HepG2 (cell line): ENCODE measurements at regions of chr9 and their contacts with region 1.

Region 1: DNA sequence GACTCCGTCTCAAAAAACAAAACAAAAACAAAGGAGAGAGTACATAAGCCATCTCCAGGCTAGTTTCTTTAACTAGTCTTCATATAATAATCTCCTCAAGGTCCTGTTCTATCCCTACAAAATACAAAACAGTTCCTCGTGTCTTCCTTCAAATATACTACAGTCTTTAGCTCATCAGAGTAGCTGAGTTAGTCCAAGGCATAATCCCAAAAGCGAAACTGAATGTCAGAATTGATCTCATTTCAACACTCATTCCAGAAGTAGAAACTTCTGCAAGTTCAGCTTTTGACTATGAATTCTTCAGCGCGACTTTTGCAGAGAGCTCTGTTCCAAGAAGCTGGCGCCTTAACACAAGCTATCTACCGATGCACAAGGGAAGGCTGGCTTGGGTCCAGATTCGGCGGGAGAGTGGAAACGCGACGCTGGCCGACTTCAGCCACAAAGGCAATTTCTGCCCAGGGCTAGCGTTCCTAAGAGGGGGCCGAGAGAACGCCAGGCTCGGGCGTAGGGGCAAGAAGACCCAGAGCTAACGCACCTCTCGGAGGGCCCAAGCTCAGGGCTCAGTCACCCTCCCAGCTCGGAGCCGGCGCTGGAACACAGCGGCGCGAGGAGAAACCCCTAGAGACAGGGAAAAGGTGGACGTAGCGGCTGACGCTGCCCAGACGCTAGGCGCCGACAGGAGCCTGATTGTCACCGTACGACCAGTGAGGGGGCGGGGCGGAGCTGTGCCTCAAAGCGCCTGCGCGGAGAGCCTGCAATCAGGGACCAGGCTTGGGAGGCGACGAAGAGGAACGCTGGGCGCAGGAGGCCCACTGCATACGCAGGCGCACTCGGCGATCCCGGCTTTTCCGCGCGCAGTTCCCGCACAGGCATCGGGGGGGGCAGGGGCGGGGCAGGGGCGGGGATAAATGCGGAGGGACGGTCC is 469 bp upstream of the HSDL2 start:
- DNase-seq: peak; percentile 96
- ATAC-seq: peak; percentile 91
- H3K4me3 ChIP-seq: peak overlapping the region; percentile 84 to 94 (median 89)
- H3K27ac ChIP-seq: peak overlapping the region; percentile 98
- H3K4me1 ChIP-seq: peaks cover 68% of the 10 kb centered on the region
- H3K27me3 ChIP-seq: no peaks in the 10 kb centered on the region; a peak in 1 of 5 replicates
- CTCF ChIP-seq: peak; percentile 47
- EP300 ChIP-seq: no peak; a peak in 1 of 4 replicates
- POLR2A ChIP-seq: peak; percentile 91 to 96
- RAD21 ChIP-seq: peak; percentile 62

Region 2: DNA sequence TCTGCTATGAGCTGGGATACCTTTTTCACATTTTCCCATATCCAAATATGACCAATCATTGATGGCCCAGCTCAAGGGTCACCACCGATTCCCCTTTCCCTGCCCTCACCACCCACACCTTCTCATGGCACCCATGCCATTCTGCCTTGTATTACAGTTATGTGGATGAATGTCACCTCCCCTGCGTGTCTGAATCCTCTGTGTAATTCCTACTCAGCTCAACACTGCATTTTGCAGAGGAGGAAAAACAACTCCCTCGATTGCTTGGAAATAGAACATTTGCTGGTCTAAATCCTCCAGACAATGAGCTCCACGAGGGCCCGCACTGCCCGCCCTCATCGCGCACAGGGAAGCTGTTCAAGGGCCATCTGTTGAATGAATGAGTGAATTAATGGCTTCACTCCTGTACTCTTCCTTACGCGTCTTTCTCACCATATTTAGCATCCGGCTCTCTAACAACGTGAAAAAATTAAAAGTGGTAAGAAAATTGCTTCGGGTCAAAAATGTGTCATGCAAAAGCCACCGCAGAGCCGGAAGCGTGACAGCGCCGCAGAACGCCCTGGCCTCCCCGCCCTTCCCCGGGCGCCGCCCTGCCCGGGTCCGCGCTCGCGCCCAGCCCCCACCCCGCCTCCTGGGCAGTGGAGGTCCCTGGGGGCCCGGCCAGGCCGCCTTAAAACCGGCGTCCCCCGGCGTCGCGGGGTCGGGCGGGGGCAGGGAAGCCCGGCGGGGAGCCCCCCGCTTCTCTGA is 205.0 kb before region 1 on chr9:
- CTCF ChIA-PET with region 1: no interaction called
- POLR2A ChIA-PET with region 1: interaction called, 13 read pairs
- in situ Hi-C with region 1: no loop called
- intact Hi-C with region 1: no loop called
- DNase-seq: peak; percentile 44
- ATAC-seq: peak; percentile 79
- H3K4me3 ChIP-seq: peak overlapping the region; percentile 62 to 91 (median 89)
- H3K27ac ChIP-seq: peak overlapping the region; percentile 72
- H3K4me1 ChIP-seq: peaks cover 88% of the 10 kb centered on the region
- H3K27me3 ChIP-seq: no peaks in the 10 kb centered on the region; a peak in 1 of 5 replicates
- CTCF ChIP-seq: no peak
- EP300 ChIP-seq: no peak
- POLR2A ChIP-seq: no peak; a peak in 2 of 4 replicates
- RAD21 ChIP-seq: no peak; the same call in 1 of the 2 replicates

Region 3: DNA sequence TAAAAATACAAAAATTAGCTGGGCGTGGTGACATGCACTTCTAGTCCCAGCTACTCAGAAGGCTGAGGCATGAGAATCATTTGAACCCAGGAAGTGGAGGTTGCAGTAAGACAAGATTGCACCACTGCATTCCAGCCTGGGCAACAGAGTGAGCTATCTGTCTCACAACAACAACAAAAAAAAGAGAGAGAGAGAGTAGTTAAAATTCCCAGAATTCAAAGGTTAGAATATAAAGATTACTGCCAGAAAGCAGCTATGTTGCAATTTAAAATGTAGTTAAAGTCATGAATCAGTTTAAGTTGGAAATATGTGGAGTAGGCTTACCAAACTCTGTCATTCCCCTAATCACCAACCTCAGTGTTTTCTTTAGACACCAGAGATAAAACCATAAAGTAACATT is 145.7 kb before region 1 on chr9:
- CTCF ChIA-PET with region 1: no interaction called
- POLR2A ChIA-PET with region 1: no interaction called
- in situ Hi-C with region 1: no loop called
- intact Hi-C with region 1: no loop called
- DNase-seq: peak; percentile 18
- ATAC-seq: no peak
- H3K4me3 ChIP-seq: no peak overlapping the region
- H3K27ac ChIP-seq: no peak overlapping the region
- H3K4me1 ChIP-seq: peaks cover 14% of the 10 kb centered on the region
- H3K27me3 ChIP-seq: no peaks in the 10 kb centered on the region
- CTCF ChIP-seq: no peak
- EP300 ChIP-seq: no peak
- POLR2A ChIP-seq: no peak
- RAD21 ChIP-seq: no peak

Region 4: GRCh38 chr9:112361601-112362000 is 17.8 kb before region 1 on chr9:
- CTCF ChIA-PET with region 1: no interaction called
- POLR2A ChIA-PET with region 1: interaction called, 15 read pairs
- in situ Hi-C with region 1: no loop called
- intact Hi-C with region 1: no loop called
- DNase-seq: peak; percentile 37
- ATAC-seq: peak; percentile 57
- H3K4me3 ChIP-seq: no peak overlapping the region
- H3K27ac ChIP-seq: no peak overlapping the region
- H3K4me1 ChIP-seq: peaks cover 6% of the 10 kb centered on the region
- H3K27me3 ChIP-seq: no peaks in the 10 kb centered on the region
- CTCF ChIP-seq: peak; percentile 56
- EP300 ChIP-seq: no peak
- POLR2A ChIP-seq: no peak
- RAD21 ChIP-seq: 0 out of 2 replicates have a peak, but pooled peaks have one; percentile 36

Region 5: DNA sequence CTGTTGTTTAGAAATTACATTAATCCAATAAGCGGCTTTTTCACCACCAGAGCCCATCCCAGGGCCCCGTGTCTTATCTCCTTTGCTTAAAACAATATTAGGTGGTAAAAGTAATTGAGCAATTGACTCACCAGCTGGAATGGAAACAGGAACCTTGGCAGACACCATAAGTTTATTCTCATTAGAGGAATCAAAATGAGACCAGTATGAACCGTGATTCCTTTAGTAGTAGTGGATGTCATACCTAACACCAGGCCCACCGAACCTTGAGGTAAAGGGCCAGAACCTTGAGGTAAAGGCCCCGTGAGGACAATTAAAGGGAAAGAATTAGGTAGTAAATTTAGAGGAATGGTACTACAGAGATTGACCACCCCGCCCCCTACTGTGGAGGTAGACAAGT is 17.0 kb after region 1 on chr9:
- CTCF ChIA-PET with region 1: no interaction called
- POLR2A ChIA-PET with region 1: interaction called, 14 read pairs
- in situ Hi-C with region 1: no loop called
- intact Hi-C with region 1: loop called (anchors 1 kb)
- DNase-seq: no peak
- ATAC-seq: no peak
- H3K4me3 ChIP-seq: no peak overlapping the region
- H3K27ac ChIP-seq: peak overlapping the region; percentile 47
- H3K4me1 ChIP-seq: peaks cover 78% of the 10 kb centered on the region
- H3K27me3 ChIP-seq: no peaks in the 10 kb centered on the region
- CTCF ChIP-seq: no peak
- EP300 ChIP-seq: no peak
- POLR2A ChIP-seq: no peak
- RAD21 ChIP-seq: no peak

Region 6: DNA sequence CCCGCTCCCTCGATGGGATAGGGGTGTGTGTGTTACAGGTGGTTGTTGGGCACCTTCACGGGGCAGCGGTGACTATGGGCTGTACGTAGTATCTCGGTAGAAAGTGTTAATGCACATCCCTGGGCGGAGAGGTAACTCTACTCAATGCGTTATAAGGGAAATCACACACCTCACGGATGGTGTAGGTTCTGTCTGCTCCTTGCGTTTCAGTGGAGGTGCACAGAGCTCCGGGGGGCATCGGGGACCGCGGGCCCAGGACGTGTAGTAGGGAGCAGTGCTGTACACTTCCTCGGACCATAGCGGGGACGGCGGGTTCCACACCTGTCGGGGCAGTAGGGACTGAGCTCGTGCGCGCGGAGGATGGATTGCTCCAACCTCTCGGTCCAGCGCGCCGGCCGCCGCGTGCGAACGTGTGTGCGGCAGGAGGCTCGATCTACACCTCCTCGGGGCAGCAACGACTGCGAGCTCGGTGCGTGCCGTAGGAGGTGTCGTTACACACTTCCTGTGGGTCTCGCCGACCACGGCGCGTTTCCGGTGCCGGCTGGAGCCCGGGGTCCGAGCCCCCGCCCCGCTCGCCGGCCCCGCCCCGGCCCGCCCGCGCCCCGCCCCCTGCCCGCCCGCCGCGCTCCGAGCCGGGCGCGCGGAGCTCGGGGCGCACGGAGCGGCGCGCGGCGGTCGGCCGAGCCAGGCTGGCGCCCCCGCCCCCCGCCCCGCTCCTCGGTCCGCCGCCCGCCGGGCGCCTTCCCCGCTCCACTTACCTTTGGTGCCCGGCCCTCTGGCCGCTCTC is 107.0 kb after region 1 on chr9 and contains the start of gene KIAA1958:
- CTCF ChIA-PET with region 1: no interaction called
- POLR2A ChIA-PET with region 1: interaction called, 16 read pairs
- in situ Hi-C with region 1: no loop called
- intact Hi-C with region 1: no loop called
- DNase-seq: peak; percentile 81
- ATAC-seq: peak; percentile 90
- H3K4me3 ChIP-seq: peak within 1 kb of the TSS; percentile 88 to 95 (median 93)
- H3K27ac ChIP-seq: peak within 1 kb of the TSS; percentile 86
- H3K4me1 ChIP-seq: peaks cover 45% of the 10 kb centered on the region
- H3K27me3 ChIP-seq: no peaks in the 10 kb centered on the region; a peak in 1 of 5 replicates
- CTCF ChIP-seq: peak; percentile 36
- EP300 ChIP-seq: no peak
- POLR2A ChIP-seq: peak; percentile 92 to 99
- RAD21 ChIP-seq: peak; percentile 42
- total RNA-seq, gene KIAA1958: 8.5 and 11.4 TPM in 2 replicates

Region 7: DNA sequence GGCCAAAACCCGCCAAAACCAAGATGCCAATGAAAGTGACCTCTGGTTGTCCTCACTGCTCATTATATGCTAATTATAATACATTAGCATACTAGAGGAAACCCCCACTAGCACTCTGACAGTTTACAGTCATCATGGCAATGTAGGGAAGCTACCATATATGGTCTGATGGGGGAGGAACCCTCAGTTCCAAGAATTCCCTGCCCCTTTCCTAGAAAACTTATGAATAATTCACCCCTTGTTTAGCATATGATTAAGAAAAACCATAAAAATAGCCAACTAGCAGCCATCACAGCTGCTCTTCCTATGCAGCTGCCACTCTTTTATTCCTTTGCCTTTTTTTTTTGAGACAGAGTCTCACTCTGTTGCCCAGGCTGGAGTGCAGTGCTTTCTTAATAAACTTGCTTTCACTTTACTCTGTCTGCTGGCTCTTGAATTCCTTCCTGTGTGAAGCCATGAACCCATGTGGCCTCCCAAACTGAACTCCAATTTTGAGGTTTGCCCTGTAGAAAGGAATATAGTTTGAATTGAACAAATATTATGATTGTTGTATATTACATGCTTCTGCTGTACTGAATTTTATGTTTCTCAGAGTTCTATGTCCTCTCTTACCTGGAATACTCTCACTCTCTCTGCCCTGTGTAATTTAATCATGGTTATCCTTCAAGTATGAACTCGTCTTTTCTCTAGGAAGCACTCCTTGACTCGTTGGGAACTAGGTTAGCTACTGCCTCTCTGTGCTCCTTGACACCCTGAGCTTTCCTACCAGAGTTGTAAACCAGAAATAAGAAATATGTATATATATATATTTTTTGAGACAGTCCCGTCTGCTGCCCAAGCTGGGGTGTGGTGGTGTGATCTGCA is 166.9 kb after region 1 on chr9:
- CTCF ChIA-PET with region 1: no interaction called
- POLR2A ChIA-PET with region 1: no interaction called
- in situ Hi-C with region 1: no loop called
- intact Hi-C with region 1: no loop called
- DNase-seq: no peak
- ATAC-seq: no peak
- H3K4me3 ChIP-seq: no peak overlapping the region
- H3K27ac ChIP-seq: no peak overlapping the region
- H3K4me1 ChIP-seq: peaks cover 28% of the 10 kb centered on the region
- H3K27me3 ChIP-seq: no peaks in the 10 kb centered on the region
- CTCF ChIP-seq: no peak
- EP300 ChIP-seq: no peak
- POLR2A ChIP-seq: no peak
- RAD21 ChIP-seq: no peak

Region 8: GRCh38 chr9:112717661-112718341 is 338.4 kb after region 1 on chr9 and contains the start of gene INIP:
- CTCF ChIA-PET with region 1: no interaction called
- POLR2A ChIA-PET with region 1: interaction called, 5 read pairs
- in situ Hi-C with region 1: no loop called
- intact Hi-C with region 1: loop called (anchors 10 kb)
- DNase-seq: peak; percentile 95
- ATAC-seq: peak; percentile 96
- H3K4me3 ChIP-seq: peak within 1 kb of the TSS; percentile 86 to 94 (median 87)
- H3K27ac ChIP-seq: peak within 1 kb of the TSS; percentile 86
- H3K4me1 ChIP-seq: peaks cover 23% of the 10 kb centered on the region
- H3K27me3 ChIP-seq: no peaks in the 10 kb centered on the region
- CTCF ChIP-seq: peak; percentile 71
- EP300 ChIP-seq: no peak
- POLR2A ChIP-seq: peak; percentile 69 to 79
- RAD21 ChIP-seq: peak; percentile 44; the same call in 1 of the 2 replicates
- total RNA-seq, gene INIP: 28.6 and 42.0 TPM in 2 replicates

Region 9: DNA sequence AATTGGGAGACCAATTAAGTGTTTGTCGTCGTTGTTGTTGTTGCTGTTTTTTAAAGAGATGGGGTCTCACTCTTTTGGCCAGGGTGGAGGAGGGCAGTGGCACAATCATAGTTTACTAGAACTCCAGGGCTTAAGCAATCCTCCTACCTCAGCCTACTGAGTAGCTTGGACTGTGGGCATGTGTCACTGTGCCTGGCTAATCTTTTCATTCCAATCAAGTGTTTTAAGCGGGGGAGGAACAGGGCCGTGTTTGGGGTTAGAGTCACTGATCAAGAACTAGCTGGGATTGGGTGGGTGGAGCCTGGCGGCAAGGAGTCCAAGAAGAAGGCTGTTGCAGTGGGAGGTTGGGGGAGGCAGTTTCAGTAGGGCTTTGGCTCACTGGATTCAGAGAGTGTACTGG is 384.9 kb after region 1 on chr9:
- CTCF ChIA-PET with region 1: no interaction called
- POLR2A ChIA-PET with region 1: interaction called, 10 read pairs
- in situ Hi-C with region 1: no loop called
- intact Hi-C with region 1: no loop called
- DNase-seq: peak; percentile 37
- ATAC-seq: peak; percentile 76
- H3K4me3 ChIP-seq: peak overlapping the region; percentile 32 to 63 (median 35); a peak in 5 of 6 replicates
- H3K27ac ChIP-seq: peak overlapping the region; percentile 67
- H3K4me1 ChIP-seq: peaks cover 38% of the 10 kb centered on the region
- H3K27me3 ChIP-seq: no peaks in the 10 kb centered on the region
- CTCF ChIP-seq: no peak
- EP300 ChIP-seq: no peak
- POLR2A ChIP-seq: no peak
- RAD21 ChIP-seq: no peak

Region 10: DNA sequence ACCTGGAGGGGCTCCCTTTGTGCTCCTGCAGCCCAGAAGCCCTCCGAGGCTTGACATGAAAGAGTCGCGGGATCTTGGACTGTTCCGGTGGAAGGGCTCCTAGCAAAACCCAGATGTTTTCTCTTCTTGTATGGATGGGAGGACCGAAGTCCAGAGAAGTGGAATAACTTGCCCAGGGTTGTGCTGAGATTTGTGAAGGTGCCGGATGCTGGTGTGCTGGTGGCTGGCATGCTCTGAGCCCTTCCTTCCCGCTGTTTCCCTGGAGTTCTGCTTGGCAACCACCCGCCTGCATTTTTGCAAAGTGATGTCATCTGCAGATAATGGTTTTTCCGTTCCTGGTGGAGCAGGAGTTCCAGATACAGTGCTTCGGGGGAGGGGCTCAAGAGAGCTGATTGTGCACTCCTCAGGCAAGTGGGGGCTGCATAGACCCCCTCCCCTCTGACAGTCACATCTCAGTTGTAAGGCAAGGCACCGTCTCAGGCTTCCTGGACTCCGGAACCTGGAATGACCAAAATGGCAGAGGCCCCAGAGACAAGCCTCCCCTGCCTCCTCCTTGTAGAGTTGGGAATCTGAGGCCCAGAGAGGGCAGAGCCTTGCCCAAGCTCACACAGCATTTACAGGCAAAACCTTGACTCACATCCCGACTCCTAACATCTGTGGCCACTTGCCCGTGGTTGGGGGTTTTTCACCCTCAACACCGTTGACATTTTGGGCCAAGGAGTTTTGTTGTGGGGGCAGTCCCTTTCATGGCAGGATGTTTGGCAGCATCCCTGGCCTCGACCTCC is 1241.1 kb after region 1 on chr9:
- CTCF ChIA-PET with region 1: no interaction called
- POLR2A ChIA-PET with region 1: no interaction called
- in situ Hi-C with region 1: no loop called
- intact Hi-C with region 1: no loop called
- DNase-seq: peak; percentile 77
- ATAC-seq: peak; percentile 58
- H3K4me3 ChIP-seq: peak overlapping the region in 2 of 3 experiments; percentile 9 to 39; a peak in 2 of 6 replicates
- H3K27ac ChIP-seq: no peak overlapping the region
- H3K4me1 ChIP-seq: peaks cover 73% of the 10 kb centered on the region
- H3K27me3 ChIP-seq: peaks cover 0 to 17% of the 10 kb centered on the region in 2 experiments; a peak in 2 of 5 replicates
- CTCF ChIP-seq: no peak
- EP300 ChIP-seq: no peak
- POLR2A ChIP-seq: no peak
- RAD21 ChIP-seq: 0 out of 2 replicates have a peak, but pooled peaks have one; percentile 20